ENCODE measurements at regions of chr21 and their contacts with region 1.

Region 1: DNA sequence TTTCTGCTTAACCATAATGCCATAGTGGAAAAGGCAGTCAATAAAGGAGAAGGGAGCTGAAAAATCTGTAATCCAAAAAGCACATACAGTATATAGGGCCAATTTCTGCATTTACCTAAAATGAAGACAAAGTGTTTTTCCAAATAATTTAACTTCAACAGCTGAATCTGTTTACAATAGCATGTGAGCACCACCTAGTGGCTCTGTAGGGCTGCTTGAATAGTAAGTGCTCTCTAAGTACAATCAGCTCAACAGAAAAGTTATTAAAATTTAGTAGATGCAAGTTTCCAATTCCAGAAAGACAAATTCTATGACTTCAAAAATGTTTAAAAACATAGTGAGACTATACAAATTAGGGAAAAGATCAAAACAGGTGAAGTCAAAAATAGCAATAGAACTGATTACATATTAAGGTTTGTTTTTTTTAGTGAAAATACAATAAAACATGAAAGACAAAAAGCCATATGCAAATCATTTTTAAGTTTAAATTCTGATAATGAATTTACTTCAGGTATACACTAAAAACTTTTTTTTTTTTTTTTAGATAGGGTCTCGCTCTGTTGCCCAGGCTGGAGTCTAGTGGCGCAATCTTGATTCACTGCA is 220.0 kb downstream of the SETD4 start:
- DNase-seq: peak; percentile 37
- CTCF ChIP-seq: peak; percentile 71

Region 2: GRCh38 chr21:34688145-34688544 is 1152.2 kb before region 1 on chr21:
- CTCF ChIA-PET with region 1: interaction called, 13 read pairs
- POLR2A ChIA-PET with region 1: no interaction called
- DNase-seq: no peak
- CTCF ChIP-seq: peak; percentile 39

Region 3: GRCh38 chr21:34722684-34723300 is 1117.5 kb before region 1 on chr21:
- CTCF ChIA-PET with region 1: interaction called, 10 read pairs
- POLR2A ChIA-PET with region 1: no interaction called
- DNase-seq: peak; percentile 58
- CTCF ChIP-seq: peak; percentile 58

Region 4: GRCh38 chr21:35824136-35824535 is 16.2 kb before region 1 on chr21:
- CTCF ChIA-PET with region 1: interaction called, 10 read pairs
- POLR2A ChIA-PET with region 1: no interaction called
- DNase-seq: no peak
- CTCF ChIP-seq: no peak

Region 5: DNA sequence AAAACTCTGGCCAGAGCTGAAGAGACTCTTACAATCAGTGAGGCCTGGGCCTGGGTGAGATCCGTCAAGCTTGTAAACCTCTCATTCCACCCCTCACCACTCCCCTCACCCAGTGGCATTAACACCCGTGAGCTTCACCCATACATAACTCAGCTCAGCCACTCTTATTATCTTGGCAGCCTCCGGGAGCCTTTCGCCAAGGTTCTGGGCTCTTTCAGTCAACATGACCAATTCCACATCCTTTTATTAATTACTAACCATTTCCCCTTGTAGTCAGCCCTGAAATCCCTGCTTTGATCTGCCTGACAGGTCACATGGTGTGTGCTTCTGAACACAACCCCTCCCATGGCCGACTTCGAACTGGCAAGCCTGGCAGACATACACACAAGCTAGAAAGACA is 85.2 kb after region 1 on chr21:
- CTCF ChIA-PET with region 1: no interaction called
- POLR2A ChIA-PET with region 1: no interaction called
- DNase-seq: no peak
- CTCF ChIP-seq: no peak

Measured in GM10248 (cell line).